Calu3 (cell line): ENCODE measurements at regions of chr22 and their contacts with region 1.

Region 1: DNA sequence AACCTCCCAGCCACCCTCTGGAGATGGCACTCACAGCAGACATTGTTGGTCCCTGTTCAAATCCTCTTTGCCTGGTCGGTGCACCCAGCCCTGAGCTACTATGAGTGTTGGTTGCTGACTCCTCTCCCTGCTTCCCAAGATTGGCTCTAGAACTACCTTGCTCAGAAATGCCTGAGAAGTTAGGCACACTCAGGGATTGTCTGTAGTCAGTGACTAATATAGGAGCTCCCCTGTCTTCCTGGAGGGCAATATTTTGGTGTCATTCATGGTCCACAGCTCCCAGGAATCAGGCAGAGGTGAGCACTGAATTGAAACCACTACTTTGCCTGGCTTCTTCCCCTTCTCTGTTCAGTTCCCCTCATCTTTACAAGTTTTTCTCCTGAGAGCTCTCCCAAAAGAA is 325.9 kb downstream of the MIAT start:
- DNase-seq: no peak
- H3K4me3 Mint-ChIP-seq: no peak overlapping the region
- H3K27ac Mint-ChIP-seq: no peak overlapping the region
- H3K4me1 Mint-ChIP-seq: no peaks in the 10 kb centered on the region
- H3K27me3 Mint-ChIP-seq: no peaks in the 10 kb centered on the region
- CTCF ChIP-seq: no peak

Region 2: DNA sequence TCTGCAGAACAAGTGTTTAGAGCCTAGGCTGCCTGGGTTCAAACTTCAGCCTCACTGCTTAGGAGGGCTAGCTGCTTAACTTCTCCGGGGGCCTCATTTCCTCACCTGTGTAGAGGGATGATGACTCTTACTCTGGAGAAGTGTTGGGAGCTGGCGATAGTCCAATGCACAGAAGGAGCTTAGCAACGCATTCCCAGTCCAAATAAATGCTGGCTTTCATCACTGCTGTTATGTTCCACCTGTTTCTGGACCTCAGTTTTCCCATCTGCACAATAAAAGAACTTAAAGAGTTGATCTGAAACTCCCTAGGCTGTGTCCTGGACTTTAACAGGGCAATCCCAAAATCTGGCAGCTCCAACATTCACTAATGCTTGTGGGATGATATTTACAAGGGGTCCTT is 11.9 kb after region 1 on chr22:
- CTCF ChIA-PET with region 1: no interaction called
- intact Hi-C with region 1: no loop called
- DNase-seq: no peak
- H3K4me3 Mint-ChIP-seq: no peak overlapping the region
- H3K27ac Mint-ChIP-seq: no peak overlapping the region
- H3K4me1 Mint-ChIP-seq: no peaks in the 10 kb centered on the region
- H3K27me3 Mint-ChIP-seq: peaks cover 80% of the 10 kb centered on the region
- CTCF ChIP-seq: no peak

Region 3: GRCh38 chr22:27230189-27230588 is 246.9 kb after region 1 on chr22:
- CTCF ChIA-PET with region 1: interaction called, 13 read pairs
- intact Hi-C with region 1: no loop called
- DNase-seq: no peak
- H3K4me3 Mint-ChIP-seq: no peak overlapping the region
- H3K27ac Mint-ChIP-seq: no peak overlapping the region
- H3K4me1 Mint-ChIP-seq: no peaks in the 10 kb centered on the region
- H3K27me3 Mint-ChIP-seq: no peaks in the 10 kb centered on the region
- CTCF ChIP-seq: no peak